Lower leg skin (tissue), 4 donors: ENCODE measurements at regions of chr2 and their contacts with region 1.

Region 1: DNA sequence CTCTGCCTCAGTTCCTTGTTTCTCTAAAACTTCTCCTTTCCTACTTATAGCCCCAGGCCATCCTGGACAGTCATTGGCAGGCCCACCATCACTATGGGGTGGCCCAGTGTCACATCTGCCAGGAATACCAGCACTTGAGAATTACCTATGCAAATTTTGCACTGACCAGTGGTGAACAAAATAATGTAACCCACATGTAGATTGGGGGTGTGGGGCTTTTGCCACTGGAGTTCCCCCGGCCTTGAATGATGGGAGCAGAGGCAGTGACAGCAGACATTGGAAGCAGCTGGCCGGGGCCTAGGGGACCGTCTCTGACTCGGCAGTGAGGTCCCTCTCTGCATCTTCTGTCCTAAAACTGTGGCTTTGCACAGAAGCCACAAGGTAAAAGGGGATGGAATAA is 24.9 kb upstream of the DNMT3A start:
- DNase-seq: no peak
- H3K4me3 ChIP-seq: no peak overlapping the region
- CTCF ChIP-seq: no peak
- POLR2A ChIP-seq: no peak

Region 2: GRCh38 chr2:25402477-25402876 is 35.8 kb after region 1 on chr2:
- intact Hi-C with region 1: loop called (anchors 1 kb)
- DNase-seq: peak in 1 of 2 donors; percentile 32
- H3K4me3 ChIP-seq: no peak overlapping the region
- CTCF ChIP-seq: no peak
- POLR2A ChIP-seq: no peak